Cardiac septum (tissue), 1 donor: ENCODE measurements at regions of chr4 and their contacts with region 1.

Region 1: GRCh38 chr4:85798012-85798770 is 323.2 kb downstream of the ARHGAP24 start:
- DNase-seq: no peak

Region 2: DNA sequence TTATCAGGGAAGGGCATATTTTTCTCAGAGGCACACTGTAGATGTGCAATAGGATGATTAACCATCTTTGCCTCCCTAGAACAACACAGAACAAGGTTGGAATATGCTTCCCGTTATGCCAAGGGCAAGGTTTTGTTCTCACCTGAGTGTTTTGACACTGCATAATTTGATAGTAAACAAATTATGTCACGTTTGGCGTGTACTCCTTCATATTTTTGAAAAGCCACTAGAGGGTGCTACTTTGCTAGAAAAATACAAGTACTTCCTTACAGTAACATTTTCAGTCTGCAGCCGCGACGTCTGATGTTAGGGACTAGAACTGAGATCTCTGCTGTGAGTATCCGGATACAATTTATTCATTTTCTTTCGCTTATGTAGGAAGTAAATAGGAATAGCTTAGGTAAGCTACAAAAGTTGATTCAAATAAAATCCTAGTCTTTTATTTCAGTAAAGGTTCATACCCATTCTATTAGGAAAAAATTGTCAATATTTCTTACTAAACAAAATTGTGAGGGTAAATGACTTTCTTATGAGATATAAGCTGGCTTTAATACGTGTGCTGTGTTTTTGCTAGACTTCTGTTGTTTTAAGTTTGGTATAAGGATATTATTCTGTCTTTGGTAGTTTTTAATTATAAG is 650.6 kb before region 1 on chr4:
- intact Hi-C with region 1: loop called (anchors 5 kb)
- DNase-seq: no peak

Region 3: DNA sequence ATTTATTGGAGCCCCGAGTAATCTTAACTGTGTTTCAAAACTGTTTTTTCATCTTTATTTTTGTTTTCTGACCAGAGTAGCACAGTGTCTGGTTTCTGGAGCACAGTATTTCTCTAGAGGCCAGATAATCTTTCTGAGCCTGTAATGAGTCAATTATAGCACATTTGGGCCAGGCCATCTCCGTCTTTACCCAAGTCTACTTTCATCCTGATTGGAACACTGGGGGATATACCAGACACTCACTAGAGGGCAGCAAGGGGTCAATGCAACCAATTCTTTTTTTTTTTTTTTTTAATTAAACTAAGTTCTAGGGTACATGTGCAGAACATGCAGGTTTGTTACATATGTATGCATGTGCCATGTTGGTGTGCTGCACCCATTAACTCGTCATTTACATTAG is 41.3 kb before region 1 on chr4:
- intact Hi-C with region 1: loop called (anchors 5 kb)
- DNase-seq: no peak

Region 4: GRCh38 chr4:85826060-85826678 is 28.0 kb after region 1 on chr4:
- intact Hi-C with region 1: no loop called
- DNase-seq: no peak